Left ventricle myocardium superior (tissue), 1 donor: ENCODE measurements at regions of chr2 and their contacts with region 1.

Region 1: DNA sequence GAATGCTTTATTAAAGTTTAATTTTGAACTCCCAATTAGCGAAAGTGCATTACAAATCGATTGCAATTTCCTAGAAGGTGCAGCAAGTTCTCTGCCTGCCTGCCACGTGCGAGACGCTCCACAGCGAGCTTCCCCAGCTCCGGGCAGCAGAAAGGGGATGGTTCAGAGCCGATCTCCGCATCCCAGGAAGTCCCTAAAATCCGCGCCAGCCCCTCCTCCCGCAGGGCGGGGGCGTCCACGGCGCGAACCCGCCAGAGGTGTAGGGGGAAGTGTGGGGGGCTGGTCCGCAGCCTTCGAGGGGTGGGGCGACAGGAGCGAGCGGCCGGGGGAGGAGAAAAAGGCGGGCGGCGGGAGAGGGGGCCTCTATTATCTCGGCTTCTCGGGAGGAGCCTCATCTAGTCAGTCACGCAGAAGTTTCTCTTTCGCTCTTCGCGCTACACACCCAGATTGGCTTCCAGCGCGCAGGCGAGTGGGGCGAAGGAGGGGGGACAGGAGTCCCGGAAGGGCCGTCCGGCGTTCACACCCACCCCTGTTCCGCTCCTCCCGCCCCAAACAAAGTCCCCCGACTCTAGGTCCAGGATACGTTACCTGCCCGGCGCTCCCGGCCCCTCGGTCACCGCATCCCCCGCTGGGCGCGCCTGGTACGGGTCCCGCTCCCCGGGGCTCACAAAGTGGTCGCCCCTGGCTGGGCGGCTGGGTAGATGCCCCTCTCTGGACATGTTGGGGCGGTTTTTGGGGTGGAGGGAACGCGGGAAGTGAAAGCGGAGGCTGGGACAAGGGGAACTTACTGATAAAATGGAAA is 9.1 kb upstream of the NR4A2 start:
- DNase-seq: peak; percentile 91
- ATAC-seq: peak; percentile 87

Region 2: GRCh38 chr2:156399722-156400244 is 58.1 kb after region 1 on chr2:
- intact Hi-C with region 1: loop called (anchors 5 kb)
- DNase-seq: no peak
- ATAC-seq: no peak

Region 3: GRCh38 chr2:156573710-156574109 is 232.1 kb after region 1 on chr2:
- intact Hi-C with region 1: loop called (anchors 10 kb)
- DNase-seq: no peak
- ATAC-seq: no peak